ENCODE measurements at regions of chr3 and their contacts with region 1.

Region 1: GRCh38 chr3:137013955-137014688 is 56.3 kb downstream of the IL20RB start:
- DNase-seq: peak; percentile 76
- ATAC-seq: peak; percentile 88
- H3K4me3 Mint-ChIP-seq: peak overlapping the region; percentile 65
- H3K27ac Mint-ChIP-seq: no peak overlapping the region
- H3K4me1 Mint-ChIP-seq: peaks cover 8% of the 10 kb centered on the region
- H3K27me3 Mint-ChIP-seq: no peaks in the 10 kb centered on the region
- CTCF ChIP-seq: no peak

Region 2: GRCh38 chr3:136350132-136350531 is 664.0 kb before region 1 on chr3:
- CTCF ChIA-PET with region 1: interaction called, 13 read pairs
- POLR2A ChIA-PET with region 1: no interaction called
- intact Hi-C with region 1: loop called (anchors 10 kb)
- DNase-seq: no peak
- ATAC-seq: no peak
- H3K4me3 Mint-ChIP-seq: no peak overlapping the region
- H3K27ac Mint-ChIP-seq: no peak overlapping the region
- H3K4me1 Mint-ChIP-seq: peaks cover 3% of the 10 kb centered on the region
- H3K27me3 Mint-ChIP-seq: no peaks in the 10 kb centered on the region
- CTCF ChIP-seq: no peak

Region 3: DNA sequence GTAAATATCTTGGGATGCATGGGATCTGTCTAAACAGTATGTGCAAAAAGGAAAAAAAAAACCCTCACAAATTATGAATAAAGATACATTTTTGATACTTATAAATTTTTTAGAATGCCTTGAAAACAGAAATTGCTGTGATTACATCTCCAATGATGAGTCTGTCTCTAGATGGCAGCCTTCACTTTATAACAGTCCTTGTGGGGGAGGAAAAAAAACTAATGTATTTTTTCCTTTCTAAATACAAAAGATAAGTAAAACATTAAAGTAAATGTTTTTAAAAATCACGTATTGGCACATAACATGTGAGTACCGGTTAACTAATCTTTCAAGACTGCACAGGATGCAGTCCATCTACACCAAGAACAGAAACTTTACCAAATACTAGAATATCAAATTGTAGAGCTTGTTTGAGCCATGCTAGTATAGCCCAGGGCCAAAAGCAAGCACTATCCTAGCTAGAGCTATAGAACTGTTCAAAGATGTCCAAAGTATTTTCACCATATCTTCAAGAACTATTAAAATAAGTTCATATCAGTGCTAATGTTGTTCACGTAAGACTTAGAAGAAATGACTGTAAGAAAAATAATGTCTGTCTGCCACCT is 468.4 kb before region 1 on chr3:
- CTCF ChIA-PET with region 1: interaction called, 3 read pairs
- POLR2A ChIA-PET with region 1: no interaction called
- intact Hi-C with region 1: loop called (anchors 2 kb)
- DNase-seq: no peak
- ATAC-seq: no peak
- H3K4me3 Mint-ChIP-seq: no peak overlapping the region
- H3K27ac Mint-ChIP-seq: no peak overlapping the region
- H3K4me1 Mint-ChIP-seq: peaks cover 17% of the 10 kb centered on the region
- H3K27me3 Mint-ChIP-seq: no peaks in the 10 kb centered on the region
- CTCF ChIP-seq: no peak

Region 4: DNA sequence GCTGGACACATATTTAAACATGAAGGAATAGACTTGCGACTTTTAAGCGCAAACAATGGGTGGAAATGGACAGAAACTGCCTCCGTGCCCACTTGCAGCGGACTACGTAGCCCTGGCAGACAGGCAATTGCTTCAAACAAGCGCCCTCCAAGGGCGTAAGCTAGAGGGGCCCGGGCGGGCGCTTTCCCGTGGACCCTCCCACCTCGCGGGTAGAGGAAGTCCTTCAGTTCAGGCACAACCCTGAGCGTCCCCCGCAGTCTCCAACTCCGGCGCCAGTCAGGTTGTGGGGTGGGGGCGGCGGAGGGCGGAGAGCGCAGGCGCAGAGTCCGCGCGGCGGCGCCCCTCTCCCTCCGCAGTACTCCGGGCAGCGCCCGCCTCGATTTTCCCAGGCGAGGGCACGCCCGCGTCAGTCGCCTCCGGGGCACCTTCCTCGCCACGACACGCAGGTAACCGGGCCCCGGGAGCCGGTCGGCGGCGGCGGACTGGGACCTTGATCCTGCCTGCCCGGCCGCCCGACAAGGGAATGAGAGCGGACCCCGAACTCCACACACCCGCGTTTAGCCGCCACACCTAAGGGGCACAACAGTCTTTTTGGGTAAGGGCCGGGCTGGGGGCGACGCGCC is 195.2 kb before region 1 on chr3 and contains the start of gene SLC35G2:
- CTCF ChIA-PET with region 1: no interaction called
- POLR2A ChIA-PET with region 1: no interaction called
- intact Hi-C with region 1: loop called (anchors 1 kb)
- DNase-seq: peak; percentile 42
- ATAC-seq: peak; percentile 67
- H3K4me3 Mint-ChIP-seq: peak within 1 kb of the TSS; percentile 89
- H3K27ac Mint-ChIP-seq: peak within 1 kb of the TSS; percentile 87
- H3K4me1 Mint-ChIP-seq: peaks cover 22% of the 10 kb centered on the region
- H3K27me3 Mint-ChIP-seq: peaks cover 21% of the 10 kb centered on the region
- CTCF ChIP-seq: no peak
- total RNA-seq, gene SLC35G2: 4.2 and 4.3 TPM in 2 replicates

Measured in activated B cell treated with CpG ODN at 0.5 μM for 24 hours (primary cell).